Left ventricle myocardium inferior (tissue), 1 donor: ENCODE measurements at regions of chr15 and their contacts with region 1.

Region 1: DNA sequence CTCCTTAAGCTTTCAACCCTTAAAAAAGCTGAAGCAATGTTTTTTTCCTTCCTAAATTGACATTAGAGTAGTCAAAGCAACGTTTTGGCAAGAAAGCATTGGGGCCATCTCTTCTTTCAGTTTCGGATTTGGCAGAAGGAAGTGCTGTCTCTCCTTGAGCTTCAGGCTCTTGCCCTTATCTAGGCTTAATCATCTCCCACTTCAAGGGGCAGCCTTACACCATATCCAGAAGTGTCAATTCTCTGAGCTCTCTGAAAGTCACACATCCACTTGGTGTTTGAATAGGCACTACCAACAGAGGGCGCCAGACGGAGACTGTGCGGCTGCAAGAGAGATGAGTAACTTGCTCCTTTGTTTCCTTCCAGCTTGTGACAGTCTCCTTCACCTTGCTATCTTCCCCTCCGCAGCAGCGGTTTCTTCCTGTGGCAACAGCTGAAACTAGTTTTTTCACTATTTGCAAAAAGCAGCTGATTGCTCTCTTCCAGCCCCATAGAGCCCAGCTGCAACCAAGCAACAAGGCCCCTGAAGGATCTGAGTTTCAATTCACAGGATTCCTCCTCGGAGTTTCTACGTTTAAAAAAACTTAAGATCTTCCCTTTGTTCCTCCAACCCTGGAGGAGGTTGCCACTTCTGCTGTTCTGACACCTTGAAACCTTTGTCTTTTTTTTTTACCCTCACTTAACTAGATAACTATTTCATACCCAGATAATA is 147.0 kb upstream of the SLCO3A1 start:
- DNase-seq: peak; percentile 63
- H3K4me3 ChIP-seq: no peak overlapping the region
- H3K27ac ChIP-seq: peak overlapping the region; percentile 40
- H3K4me1 ChIP-seq: peaks cover 12% of the 10 kb centered on the region
- H3K27me3 ChIP-seq: no peaks in the 10 kb centered on the region
- CTCF ChIP-seq: peak; percentile 94

Region 2: DNA sequence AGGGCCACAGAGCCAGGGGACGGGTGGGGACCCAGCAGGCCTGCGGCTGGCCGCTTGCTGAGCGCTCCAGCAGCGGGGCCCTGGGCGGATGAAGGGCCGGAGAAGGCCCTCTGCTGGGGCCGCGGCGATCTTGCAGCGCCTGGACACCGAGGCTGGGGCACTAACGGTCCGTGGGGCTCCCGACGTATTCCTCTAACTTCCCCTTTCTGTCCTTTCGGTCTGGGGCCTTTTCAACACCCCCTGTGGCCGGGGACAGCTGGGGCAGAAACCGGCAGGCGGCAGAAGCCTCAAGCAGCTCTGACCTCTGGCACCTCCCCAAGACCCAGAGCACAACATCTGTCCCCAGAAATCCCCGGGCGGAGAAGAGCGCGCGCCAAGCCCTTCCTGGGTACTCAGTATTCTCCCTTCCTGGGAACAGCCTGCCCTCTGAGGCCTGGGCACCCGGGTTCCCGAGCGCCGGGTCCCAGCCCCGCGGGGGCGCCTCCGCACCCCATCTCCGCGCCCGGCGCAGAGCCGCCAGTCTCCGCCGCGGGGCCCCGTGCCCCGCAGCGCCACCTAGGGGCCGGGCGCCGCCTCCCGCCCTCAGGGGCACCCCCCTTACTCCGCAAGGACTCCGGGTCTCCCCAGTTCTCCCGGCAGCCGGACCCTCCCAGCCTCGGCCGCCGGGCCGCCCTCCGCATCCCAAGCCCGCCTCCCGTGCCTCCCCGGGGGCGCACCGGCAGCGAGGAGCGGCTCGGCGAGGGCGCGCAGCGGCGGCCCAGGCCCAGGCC is 146.4 kb after region 1 on chr15:
- intact Hi-C with region 1: loop called (anchors 10 kb)
- DNase-seq: peak; percentile 83
- H3K4me3 ChIP-seq: peak overlapping the region; percentile 78
- H3K27ac ChIP-seq: peak overlapping the region; percentile 99
- H3K4me1 ChIP-seq: peaks cover 64% of the 10 kb centered on the region
- H3K27me3 ChIP-seq: no peaks in the 10 kb centered on the region
- CTCF ChIP-seq: peak; percentile 74

Region 3: DNA sequence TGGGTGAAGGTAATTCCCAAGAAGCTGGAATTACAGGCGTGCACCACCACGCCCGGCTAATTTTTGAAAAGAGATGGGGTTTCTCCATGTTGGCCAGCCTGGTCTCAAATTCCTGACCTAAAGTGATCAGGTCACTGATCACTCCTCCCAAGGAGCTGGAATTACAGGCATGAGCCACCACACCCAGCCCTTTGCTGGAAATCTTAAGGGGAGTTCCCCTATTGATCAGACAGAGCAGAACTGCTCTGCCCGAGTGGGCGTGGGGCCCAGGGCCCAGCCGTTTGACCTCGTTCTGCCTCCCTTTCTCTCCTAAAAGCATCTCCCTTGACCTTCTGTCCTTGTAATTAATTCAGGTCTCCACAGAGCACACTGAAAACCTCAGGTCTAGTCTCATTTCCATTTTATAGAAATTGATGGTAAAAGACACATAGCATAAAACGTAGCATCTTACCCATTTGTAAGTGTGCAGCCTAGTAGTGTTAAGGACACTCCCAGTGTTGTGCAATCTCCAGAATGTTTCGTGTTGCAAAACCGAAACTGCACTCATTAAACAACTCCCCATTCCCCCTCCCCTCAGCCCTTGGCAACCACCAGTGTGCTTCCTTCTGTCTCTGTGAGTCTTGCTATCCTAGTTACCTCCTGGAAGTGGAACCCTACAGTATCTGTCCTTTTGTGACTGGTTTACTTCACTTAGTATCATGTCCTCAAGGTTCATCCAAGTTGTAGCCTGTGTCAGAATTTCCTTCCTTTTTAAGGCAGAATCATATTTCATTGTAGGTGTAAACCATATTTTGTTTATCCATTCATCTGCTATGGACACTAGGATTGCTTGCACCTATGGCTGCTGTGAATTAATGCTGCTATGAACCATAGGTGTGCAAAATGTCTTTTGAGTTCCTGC is 236.4 kb after region 1 on chr15:
- intact Hi-C with region 1: loop called (anchors 10 kb)
- DNase-seq: peak; percentile 83
- H3K4me3 ChIP-seq: peak overlapping the region; percentile 52
- H3K27ac ChIP-seq: peak overlapping the region; percentile 84
- H3K4me1 ChIP-seq: peaks cover 98% of the 10 kb centered on the region
- H3K27me3 ChIP-seq: no peaks in the 10 kb centered on the region
- CTCF ChIP-seq: no peak